ENCODE measurements at regions of chr14 and their contacts with region 1.

Region 1: GRCh38 chr14:23631702-23632460 is 4.3 kb upstream of the DHRS2 start:
- DNase-seq: peak; percentile 82
- H3K4me3 ChIP-seq: peak overlapping the region in 1 of 4 donors; percentile 30
- H3K27ac ChIP-seq: peak overlapping the region in 1 of 4 donors; percentile 19
- H3K4me1 ChIP-seq: peaks cover 0 to 9% (median 3%) of the 10 kb centered on the region in 4 donors
- H3K27me3 ChIP-seq: no peaks in the 10 kb centered on the region
- CTCF ChIP-seq: peak; percentile 89 to 97 (median 92)
- EP300 ChIP-seq: no peak
- POLR2A ChIP-seq: no peak

Region 2: GRCh38 chr14:23660290-23661226 is 28.7 kb after region 1 on chr14:
- in situ Hi-C with region 1: no loop called
- intact Hi-C with region 1: no loop called
- DNase-seq: no peak
- H3K4me3 ChIP-seq: no peak overlapping the region
- H3K27ac ChIP-seq: no peak overlapping the region
- H3K4me1 ChIP-seq: no peaks in the 10 kb centered on the region
- H3K27me3 ChIP-seq: no peaks in the 10 kb centered on the region
- CTCF ChIP-seq: no peak
- EP300 ChIP-seq: no peak
- POLR2A ChIP-seq: no peak

Region 3: DNA sequence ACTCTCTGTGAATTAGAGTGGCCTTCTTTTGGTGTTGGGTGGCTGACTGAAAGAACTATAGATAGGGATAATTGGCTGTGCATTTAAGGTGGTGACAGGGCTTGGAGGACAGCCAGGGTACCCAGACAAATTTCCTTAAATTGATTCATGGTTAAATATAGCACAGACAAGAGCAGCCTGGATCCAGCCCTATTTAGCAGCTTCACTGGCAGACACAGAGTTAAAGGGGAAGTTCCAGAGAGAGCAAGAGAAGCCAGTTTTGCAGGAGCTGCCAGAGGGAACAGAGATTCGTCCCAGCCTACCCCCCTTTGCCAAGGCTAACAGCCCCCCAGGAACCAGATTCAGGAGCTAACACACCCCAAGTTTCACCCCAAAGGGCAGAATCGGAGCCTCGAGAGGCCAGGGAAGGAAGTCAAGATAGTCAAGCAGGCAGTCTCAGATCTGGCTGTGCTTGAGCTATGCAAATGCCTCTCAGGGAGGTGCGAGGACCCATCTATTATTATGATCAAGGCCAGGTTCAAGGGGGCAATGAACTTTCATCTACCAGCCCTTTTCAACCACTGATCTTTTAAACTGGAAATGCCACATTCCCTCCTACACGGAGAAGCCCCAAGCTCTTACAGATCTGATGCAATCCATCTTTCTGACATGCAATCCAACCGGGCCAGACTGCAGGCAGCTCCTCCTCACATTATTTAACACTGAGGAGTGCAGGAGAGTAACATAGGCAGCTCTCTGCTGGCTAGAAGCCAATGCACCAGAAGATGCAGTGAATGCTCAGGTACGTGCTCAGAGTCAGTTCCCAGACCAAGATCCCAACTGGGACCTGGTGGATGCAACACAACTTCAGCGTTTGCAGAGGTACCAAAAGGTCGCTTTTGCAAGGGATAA is 62.4 kb after region 1 on chr14:
- in situ Hi-C with region 1: no loop called
- intact Hi-C with region 1: no loop called
- DNase-seq: no peak
- H3K4me3 ChIP-seq: no peak overlapping the region
- H3K27ac ChIP-seq: no peak overlapping the region
- H3K4me1 ChIP-seq: peaks cover 6 to 20% (median 9%) of the 10 kb centered on the region in 4 donors
- H3K27me3 ChIP-seq: peaks cover 6% of the 10 kb centered on the region
- CTCF ChIP-seq: no peak
- EP300 ChIP-seq: no peak
- POLR2A ChIP-seq: no peak

Region 4: DNA sequence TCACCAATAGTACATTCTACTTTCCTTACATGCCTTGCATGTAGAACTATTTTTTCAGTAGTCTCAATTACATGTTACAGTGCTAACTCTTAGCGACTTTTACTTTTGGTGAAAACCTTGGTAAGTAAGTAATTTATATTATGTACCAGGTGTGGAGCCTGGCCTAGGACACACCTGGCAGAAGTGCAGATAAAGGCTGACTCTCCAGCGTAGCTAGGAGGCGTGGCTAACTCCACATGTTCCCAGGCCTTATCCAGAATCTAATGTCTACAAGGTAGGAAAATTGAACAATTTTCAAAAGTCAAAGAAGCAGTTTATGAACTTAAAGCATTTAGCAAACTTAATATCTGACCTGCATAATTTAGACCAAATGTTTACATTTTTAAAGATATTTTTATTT is 161.7 kb after region 1 on chr14:
- in situ Hi-C with region 1: no loop called
- intact Hi-C with region 1: no loop called
- DNase-seq: peak; percentile 11
- H3K4me3 ChIP-seq: no peak overlapping the region
- H3K27ac ChIP-seq: no peak overlapping the region
- H3K4me1 ChIP-seq: no peaks in the 10 kb centered on the region
- H3K27me3 ChIP-seq: no peaks in the 10 kb centered on the region
- CTCF ChIP-seq: no peak
- EP300 ChIP-seq: no peak
- POLR2A ChIP-seq: no peak

Region 5: GRCh38 chr14:23910101-23910875 is 278.4 kb after region 1 on chr14:
- in situ Hi-C with region 1: loop called in 1 of 4 experiments (anchors 25 kb)
- intact Hi-C with region 1: no loop called
- DNase-seq: peak; percentile 54
- H3K4me3 ChIP-seq: no peak overlapping the region
- H3K27ac ChIP-seq: no peak overlapping the region
- H3K4me1 ChIP-seq: no peaks in the 10 kb centered on the region
- H3K27me3 ChIP-seq: no peaks in the 10 kb centered on the region
- CTCF ChIP-seq: peak; percentile 61 to 77 (median 74)
- EP300 ChIP-seq: no peak
- POLR2A ChIP-seq: no peak

Region 6: GRCh38 chr14:23929822-23930294 is 298.0 kb after region 1 on chr14:
- in situ Hi-C with region 1: loop called in 2 of 4 experiments (anchors 25 kb)
- intact Hi-C with region 1: loop called (anchors 1 kb)
- DNase-seq: peak; percentile 85
- H3K4me3 ChIP-seq: no peak overlapping the region
- H3K27ac ChIP-seq: peak overlapping the region in 1 of 4 donors; percentile 2
- H3K4me1 ChIP-seq: peaks cover 0 to 6% (median 0%) of the 10 kb centered on the region in 4 donors
- H3K27me3 ChIP-seq: no peaks in the 10 kb centered on the region
- CTCF ChIP-seq: peak; percentile 78 to 97 (median 90)
- EP300 ChIP-seq: no peak
- POLR2A ChIP-seq: no peak

Measured in transverse colon (tissue), 4 donors.